WTC11 (cell line): ENCODE measurements at regions of chr15 and their contacts with region 1.

Region 1: GRCh38 chr15:65101411-65101890 is 13.5 kb downstream of the UBAP1L start:
- DNase-seq: peak; percentile 93
- ATAC-seq: peak; percentile 76
- H3K4me3 Mint-ChIP-seq: peak overlapping the region; percentile 89
- H3K27ac Mint-ChIP-seq: peak overlapping the region; percentile 86
- H3K4me1 Mint-ChIP-seq: peaks cover 2% of the 10 kb centered on the region
- H3K27me3 Mint-ChIP-seq: peaks cover 10% of the 10 kb centered on the region
- CTCF ChIP-seq: peak; percentile 76

Region 2: DNA sequence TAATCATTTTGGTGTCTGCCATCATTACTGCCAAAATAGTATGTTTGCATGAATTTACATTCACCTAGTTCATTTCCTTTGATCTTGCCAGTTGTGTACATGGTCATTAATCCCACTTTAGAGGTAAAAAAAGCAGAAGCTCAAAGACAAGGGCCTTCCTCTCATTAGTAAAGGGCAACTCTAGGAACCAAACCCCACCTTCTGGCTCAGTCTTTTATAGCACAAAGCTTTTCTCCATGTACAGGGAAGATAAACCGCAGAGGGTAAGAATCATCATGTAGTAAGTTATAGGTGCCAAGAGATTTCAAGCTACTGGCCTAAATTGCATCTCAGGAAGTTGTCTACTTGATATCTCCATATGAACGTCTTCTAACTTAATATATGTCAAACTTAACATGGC is 92.5 kb before region 1 on chr15:
- CTCF ChIA-PET with region 1: interaction called, 10 read pairs
- POLR2A ChIA-PET with region 1: no interaction called
- DNase-seq: no peak
- ATAC-seq: peak; percentile 60
- H3K4me3 Mint-ChIP-seq: no peak overlapping the region
- H3K27ac Mint-ChIP-seq: 0 out of 2 replicates have a peak overlapping the region, but pooled peaks have one; percentile 3
- H3K4me1 Mint-ChIP-seq: peaks cover 5% of the 10 kb centered on the region
- H3K27me3 Mint-ChIP-seq: no peaks in the 10 kb centered on the region
- CTCF ChIP-seq: no peak

Region 3: GRCh38 chr15:65049418-65049840 is 52.0 kb before region 1 on chr15:
- CTCF ChIA-PET with region 1: interaction called, 292 read pairs
- POLR2A ChIA-PET with region 1: interaction called, 3 read pairs
- DNase-seq: peak; percentile 91
- ATAC-seq: peak; percentile 97
- H3K4me3 Mint-ChIP-seq: peak overlapping the region; percentile 48
- H3K27ac Mint-ChIP-seq: no peak overlapping the region
- H3K4me1 Mint-ChIP-seq: peaks cover 11% of the 10 kb centered on the region; the same call in 1 of the 2 replicates
- H3K27me3 Mint-ChIP-seq: peaks cover 4% of the 10 kb centered on the region; the same call in 1 of the 2 replicates
- CTCF ChIP-seq: no peak

Region 4: DNA sequence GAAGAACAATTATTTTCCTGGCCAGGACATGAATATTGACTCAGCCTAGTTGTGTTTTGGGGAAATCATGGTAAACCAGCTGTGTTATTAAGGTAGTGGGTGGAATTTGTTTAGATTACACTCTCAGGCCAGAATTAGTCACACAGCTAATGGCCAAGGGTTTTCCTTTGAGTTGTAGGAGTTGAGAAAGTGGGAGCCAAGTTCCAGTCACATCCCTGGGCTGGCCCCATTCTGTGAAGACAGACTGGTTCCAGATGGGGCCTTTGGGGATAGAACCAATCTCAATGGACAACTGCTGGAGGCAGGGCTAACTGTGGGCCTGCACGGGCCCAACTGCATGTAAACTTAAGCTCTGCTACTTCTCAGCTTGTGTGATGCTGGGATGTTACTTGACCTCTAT is 32.3 kb before region 1 on chr15:
- CTCF ChIA-PET with region 1: interaction called, 292 read pairs
- POLR2A ChIA-PET with region 1: interaction called, 12 read pairs
- DNase-seq: no peak
- ATAC-seq: no peak
- H3K4me3 Mint-ChIP-seq: no peak overlapping the region
- H3K27ac Mint-ChIP-seq: no peak overlapping the region
- H3K4me1 Mint-ChIP-seq: peaks cover 38% of the 10 kb centered on the region
- H3K27me3 Mint-ChIP-seq: peaks cover 21% of the 10 kb centered on the region
- CTCF ChIP-seq: no peak

Region 5: DNA sequence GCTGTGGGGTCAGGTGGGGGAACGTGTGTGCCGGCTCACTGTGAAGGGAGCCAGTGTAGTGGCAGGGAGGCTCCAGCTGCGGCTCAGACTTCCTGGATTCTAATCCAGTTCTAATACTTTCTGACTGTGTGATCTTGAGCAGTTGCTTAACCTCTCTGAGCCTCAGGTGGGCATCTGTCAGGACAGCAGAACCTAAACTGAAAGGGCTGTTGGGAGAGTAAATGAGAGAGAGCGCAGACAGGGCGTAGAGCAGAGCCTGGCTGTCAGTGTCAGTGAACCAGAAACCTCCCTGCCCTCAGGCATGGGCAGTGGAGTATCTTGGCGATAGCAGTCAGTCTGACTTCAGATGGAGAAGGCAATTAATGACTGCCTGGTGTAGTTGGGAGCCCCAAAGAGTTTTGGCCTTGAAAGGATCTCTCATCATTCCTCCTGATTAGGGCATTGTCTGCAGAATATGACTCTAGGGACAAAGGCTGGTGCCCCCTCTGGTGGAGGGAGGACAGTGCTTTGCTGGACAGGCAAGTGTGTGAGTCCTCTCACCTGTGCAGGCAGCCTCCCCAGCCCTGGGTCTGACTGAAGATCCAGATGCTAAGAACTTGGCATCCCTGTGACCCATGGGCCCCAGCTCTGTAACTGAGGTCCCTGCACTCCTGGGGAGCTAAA is 15.3 kb before region 1 on chr15:
- CTCF ChIA-PET with region 1: interaction called, 308 read pairs
- POLR2A ChIA-PET with region 1: interaction called, 12 read pairs
- DNase-seq: peak; percentile 78
- ATAC-seq: peak; percentile 55
- H3K4me3 Mint-ChIP-seq: no peak overlapping the region
- H3K27ac Mint-ChIP-seq: no peak overlapping the region
- H3K4me1 Mint-ChIP-seq: peaks cover 73% of the 10 kb centered on the region
- H3K27me3 Mint-ChIP-seq: peaks cover 10% of the 10 kb centered on the region
- CTCF ChIP-seq: peak; percentile 49; the same call in 1 of the 2 replicates

Region 6: GRCh38 chr15:65184868-65185738 is 83.7 kb after region 1 on chr15 and contains the start of gene CLPX:
- CTCF ChIA-PET with region 1: interaction called, 15 read pairs
- POLR2A ChIA-PET with region 1: no interaction called
- DNase-seq: peak; percentile 86
- ATAC-seq: peak; percentile 88
- H3K4me3 Mint-ChIP-seq: peak within 1 kb of the TSS; percentile 96
- H3K27ac Mint-ChIP-seq: peak within 1 kb of the TSS; percentile 95
- H3K4me1 Mint-ChIP-seq: peaks cover 17% of the 10 kb centered on the region
- H3K27me3 Mint-ChIP-seq: no peaks in the 10 kb centered on the region
- CTCF ChIP-seq: no peak
- total RNA-seq, gene CLPX: 57.9 to 68.7 TPM (median 61.5 TPM) in 3 replicates

Region 7: DNA sequence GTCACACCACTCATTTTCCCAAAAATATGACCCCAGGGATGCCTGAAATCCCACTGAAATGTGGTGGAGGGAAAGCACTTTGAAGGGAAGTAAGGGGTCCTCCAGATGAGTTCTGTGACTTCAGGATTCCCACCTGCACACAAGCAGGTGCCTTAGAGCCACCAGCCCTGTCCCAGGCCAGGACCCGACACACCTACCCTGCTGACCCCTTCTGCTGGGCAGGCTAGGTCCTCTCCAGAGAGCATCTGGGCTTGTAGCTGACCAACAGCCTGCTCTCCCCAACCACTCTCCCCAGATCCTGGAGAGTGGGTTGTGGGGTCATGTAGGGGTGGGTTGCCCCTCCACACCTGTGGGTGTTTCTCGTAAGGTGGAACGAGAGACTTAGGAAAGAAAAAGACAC is 124.8 kb after region 1 on chr15:
- CTCF ChIA-PET with region 1: no interaction called
- POLR2A ChIA-PET with region 1: no interaction called
- DNase-seq: no peak
- ATAC-seq: peak; percentile 34; the same call in 1 of the 2 replicates
- H3K4me3 Mint-ChIP-seq: no peak overlapping the region
- H3K27ac Mint-ChIP-seq: peak overlapping the region; percentile 91; the same call in 1 of the 2 replicates
- H3K4me1 Mint-ChIP-seq: peaks cover 8% of the 10 kb centered on the region
- H3K27me3 Mint-ChIP-seq: no peaks in the 10 kb centered on the region; the same call in 1 of the 2 replicates
- CTCF ChIP-seq: no peak

Region 8: DNA sequence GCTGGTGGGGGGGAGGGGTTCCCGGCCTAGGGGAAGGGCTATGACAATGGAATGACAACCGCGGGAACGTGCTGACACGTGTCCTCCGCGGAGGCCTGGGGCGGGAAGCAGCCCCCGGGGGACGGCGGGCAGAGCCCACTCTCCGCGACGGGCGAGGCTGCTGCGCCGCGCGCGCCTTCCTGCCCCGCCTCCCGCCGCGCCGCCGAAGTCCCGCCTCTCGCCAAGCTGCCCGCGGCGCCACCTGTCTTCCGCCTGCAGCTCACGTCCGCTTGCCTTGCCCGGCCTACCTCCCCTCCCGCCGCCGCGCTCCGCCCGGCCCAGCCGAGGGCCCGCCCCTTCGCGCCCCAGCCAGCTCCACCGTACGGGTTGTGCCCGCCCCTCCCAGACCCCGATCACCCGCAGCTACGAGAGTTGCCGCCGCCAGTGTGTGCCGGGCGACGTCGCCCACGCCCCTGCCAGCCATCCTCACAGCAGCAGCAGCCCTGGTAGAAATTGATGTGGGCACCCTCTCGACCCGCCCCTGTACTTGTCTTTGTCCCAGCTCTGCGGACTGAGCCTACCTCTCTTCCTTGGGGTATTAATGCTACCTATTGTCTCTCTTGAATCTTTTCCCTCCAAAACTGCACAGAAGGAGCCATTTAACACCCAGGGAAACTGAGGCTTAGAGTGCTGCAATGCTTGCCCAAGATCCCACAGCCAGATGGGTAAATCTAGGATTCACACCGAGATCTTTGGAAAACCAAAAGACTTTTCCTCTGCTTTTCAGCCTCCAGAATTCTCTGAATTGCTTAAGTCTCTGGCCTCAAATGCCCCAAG is 185.5 kb after region 1 on chr15 and contains the start of gene PARP16:
- CTCF ChIA-PET with region 1: interaction called, 19 read pairs
- POLR2A ChIA-PET with region 1: no interaction called
- DNase-seq: peak; percentile 95
- ATAC-seq: peak; percentile 97
- H3K4me3 Mint-ChIP-seq: peak within 1 kb of the TSS; percentile 76
- H3K27ac Mint-ChIP-seq: peak within 1 kb of the TSS; percentile 83
- H3K4me1 Mint-ChIP-seq: peaks cover 17% of the 10 kb centered on the region
- H3K27me3 Mint-ChIP-seq: peaks cover 36% of the 10 kb centered on the region
- CTCF ChIP-seq: no peak
- total RNA-seq, gene PARP16: 4.7 to 6.2 TPM (median 5.8 TPM) in 3 replicates